HEK293 (cell line): ENCODE measurements at regions of chr6 and their contacts with region 1.

Region 1: DNA sequence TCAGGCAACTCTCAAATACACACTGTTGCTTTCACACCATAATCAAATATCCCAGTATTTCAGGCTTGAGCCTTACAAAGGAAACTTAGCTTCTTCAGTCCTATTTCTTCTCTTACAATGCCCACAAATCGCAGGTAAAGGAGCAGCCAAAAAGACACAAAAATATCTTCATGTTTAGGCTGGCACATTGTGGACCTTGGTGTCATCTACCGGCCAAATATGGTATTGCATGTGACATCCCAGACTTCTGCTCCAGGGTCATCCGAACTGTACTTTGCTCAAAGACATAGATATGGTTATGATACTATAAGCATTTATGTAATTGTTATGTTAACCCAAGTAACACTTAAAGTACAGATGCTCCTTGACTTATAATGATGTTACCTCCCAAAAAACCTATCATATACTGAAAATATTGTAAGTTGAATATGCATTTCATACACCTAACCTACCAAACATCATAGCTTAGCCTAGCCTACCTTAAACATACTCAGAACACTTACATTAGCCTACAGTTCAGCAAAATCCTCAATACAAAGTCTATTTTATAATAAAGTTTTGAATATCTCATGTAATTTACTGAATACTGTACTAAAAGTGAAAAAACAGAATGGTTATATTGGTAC is 4.6 kb downstream of the OR2H2 start:
- H3K4me3 ChIP-seq: no peak overlapping the region
- H3K27ac ChIP-seq: no peak overlapping the region
- H3K4me1 ChIP-seq: peaks cover 13% of the 10 kb centered on the region
- CTCF ChIP-seq: peak; percentile 83

Region 2: DNA sequence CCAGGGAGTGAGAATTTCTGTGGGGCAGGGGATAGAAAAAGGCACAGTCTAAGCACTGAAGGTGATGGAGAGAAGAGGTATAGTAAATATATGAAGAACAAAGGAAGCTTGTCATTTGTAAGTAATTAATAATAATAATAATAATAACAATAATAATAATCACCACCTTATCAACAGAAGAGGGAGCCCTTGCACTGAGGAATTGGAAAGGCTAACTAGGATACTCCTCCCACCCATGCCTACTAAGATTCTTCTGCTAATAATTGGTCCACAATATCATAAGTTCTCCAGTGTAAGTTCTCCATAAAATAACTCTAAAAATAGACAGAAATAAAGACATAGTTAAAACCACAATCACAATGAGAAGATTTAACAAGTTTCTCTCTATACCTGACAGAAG is 213.5 kb before region 1 on chr6:
- CTCF ChIA-PET with region 1: interaction called, 29 read pairs
- POLR2A ChIA-PET with region 1: no interaction called
- H3K4me3 ChIP-seq: no peak overlapping the region
- H3K27ac ChIP-seq: no peak overlapping the region
- H3K4me1 ChIP-seq: no peaks in the 10 kb centered on the region
- CTCF ChIP-seq: no peak

Region 3: GRCh38 chr6:29414588-29414987 is 174.9 kb before region 1 on chr6 and contains the start of gene OR12D1:
- CTCF ChIA-PET with region 1: interaction called, 36 read pairs
- POLR2A ChIA-PET with region 1: no interaction called
- H3K4me3 ChIP-seq: no peak within 1 kb of the TSS
- H3K27ac ChIP-seq: no peak within 1 kb of the TSS
- H3K4me1 ChIP-seq: no peaks in the 10 kb centered on the region
- CTCF ChIP-seq: no peak; the same call in 1 of the 2 replicates

Region 4: GRCh38 chr6:29632789-29633533 is 43.4 kb after region 1 on chr6 and contains the start of gene GABBR1:
- CTCF ChIA-PET with region 1: interaction called, 10 read pairs
- POLR2A ChIA-PET with region 1: interaction called, 3 read pairs
- H3K4me3 ChIP-seq: peak within 1 kb of the TSS; percentile 77
- H3K27ac ChIP-seq: peak within 1 kb of the TSS; percentile 42; the same call in 1 of the 2 replicates
- H3K4me1 ChIP-seq: peaks cover 4% of the 10 kb centered on the region; the same call in 1 of the 2 replicates
- CTCF ChIP-seq: peak; percentile 45; the same call in 1 of the 2 replicates

Region 5: DNA sequence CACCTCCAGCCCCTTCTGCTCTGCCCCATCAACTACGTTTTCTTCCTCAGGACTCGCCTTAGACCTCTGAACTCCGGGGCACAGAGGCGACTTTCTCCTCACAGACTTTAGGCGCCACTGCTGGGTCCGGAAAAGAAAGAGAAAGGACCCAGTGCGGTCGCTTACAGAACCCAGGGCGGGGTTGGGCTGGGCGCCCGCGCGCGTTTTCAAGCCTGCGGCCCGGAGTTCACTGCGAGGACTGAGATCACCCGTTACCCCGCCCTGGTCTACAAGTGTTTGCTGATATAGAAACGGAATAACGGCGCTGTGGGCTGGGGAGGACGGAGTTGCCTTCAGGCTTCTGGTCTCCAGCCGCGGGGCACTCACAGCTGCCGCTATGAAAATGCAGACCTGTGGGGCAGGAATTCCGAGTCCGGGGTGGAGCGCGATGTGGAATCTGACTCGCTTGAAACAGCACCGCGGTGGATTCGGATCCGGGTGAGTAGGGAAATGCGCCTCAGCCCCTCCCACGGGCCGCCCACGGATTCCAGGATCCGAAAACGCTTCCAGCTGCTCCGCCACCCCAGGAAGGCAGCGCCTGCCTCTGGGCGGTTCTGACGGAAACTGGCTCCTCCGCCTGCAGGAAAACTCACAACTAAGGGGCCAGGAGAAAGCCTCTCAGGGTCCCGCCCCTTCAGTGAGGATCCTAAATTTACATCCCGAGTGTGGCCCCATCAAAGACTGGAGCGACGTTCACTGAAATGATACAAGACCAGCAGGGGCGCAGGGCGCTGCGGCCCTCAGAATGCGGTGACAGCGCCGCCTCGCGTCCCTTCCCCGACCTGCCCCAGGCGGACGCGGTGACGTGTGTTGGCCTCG is 163.1 kb after region 1 on chr6:
- CTCF ChIA-PET with region 1: no interaction called
- POLR2A ChIA-PET with region 1: no interaction called
- H3K4me3 ChIP-seq: peak overlapping the region; percentile 75
- H3K27ac ChIP-seq: peak overlapping the region; percentile 46; the same call in 1 of the 2 replicates
- H3K4me1 ChIP-seq: peaks cover 5% of the 10 kb centered on the region; the same call in 1 of the 2 replicates
- CTCF ChIP-seq: peak; percentile 99

Region 6: GRCh38 chr6:29845405-29846006 is 256.0 kb after region 1 on chr6:
- CTCF ChIA-PET with region 1: no interaction called
- POLR2A ChIA-PET with region 1: no interaction called
- H3K4me3 ChIP-seq: no peak overlapping the region
- H3K27ac ChIP-seq: no peak overlapping the region
- H3K4me1 ChIP-seq: no peaks in the 10 kb centered on the region
- CTCF ChIP-seq: no peak

Region 7: GRCh38 chr6:30295837-30296236 is 706.3 kb after region 1 on chr6:
- CTCF ChIA-PET with region 1: no interaction called
- POLR2A ChIA-PET with region 1: no interaction called
- H3K4me3 ChIP-seq: no peak overlapping the region
- H3K27ac ChIP-seq: no peak overlapping the region
- H3K4me1 ChIP-seq: no peaks in the 10 kb centered on the region
- CTCF ChIP-seq: no peak